Dendritic cell treated with granulocyte-macrophage colony-stimulating factor and Interleukin-4, amounts not matched to agents 40 ng/mL and 50 ng/mL, for 4 days (primary cell): ENCODE measurements at regions of chr9 and their contacts with region 1.

Region 1: GRCh38 chr9:112097712-112098688 is 77.1 kb downstream of the SUSD1 start:
- H3K4me3 Mint-ChIP-seq: no peak overlapping the region
- H3K27ac Mint-ChIP-seq: peak overlapping the region; percentile 65
- H3K4me1 Mint-ChIP-seq: peaks cover 39% of the 10 kb centered on the region
- H3K27me3 Mint-ChIP-seq: no peaks in the 10 kb centered on the region

Region 2: DNA sequence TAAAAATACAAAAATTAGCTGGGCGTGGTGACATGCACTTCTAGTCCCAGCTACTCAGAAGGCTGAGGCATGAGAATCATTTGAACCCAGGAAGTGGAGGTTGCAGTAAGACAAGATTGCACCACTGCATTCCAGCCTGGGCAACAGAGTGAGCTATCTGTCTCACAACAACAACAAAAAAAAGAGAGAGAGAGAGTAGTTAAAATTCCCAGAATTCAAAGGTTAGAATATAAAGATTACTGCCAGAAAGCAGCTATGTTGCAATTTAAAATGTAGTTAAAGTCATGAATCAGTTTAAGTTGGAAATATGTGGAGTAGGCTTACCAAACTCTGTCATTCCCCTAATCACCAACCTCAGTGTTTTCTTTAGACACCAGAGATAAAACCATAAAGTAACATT is 135.8 kb after region 1 on chr9:
- intact Hi-C with region 1: loop called (anchors 10 kb)
- H3K4me3 Mint-ChIP-seq: no peak overlapping the region
- H3K27ac Mint-ChIP-seq: no peak overlapping the region
- H3K4me1 Mint-ChIP-seq: no peaks in the 10 kb centered on the region
- H3K27me3 Mint-ChIP-seq: no peaks in the 10 kb centered on the region

Region 3: GRCh38 chr9:112333639-112334431 is 235.8 kb after region 1 on chr9:
- intact Hi-C with region 1: loop called (anchors 10 kb)
- H3K4me3 Mint-ChIP-seq: peak overlapping the region; percentile 86
- H3K27ac Mint-ChIP-seq: peak overlapping the region; percentile 85
- H3K4me1 Mint-ChIP-seq: peaks cover 17% of the 10 kb centered on the region
- H3K27me3 Mint-ChIP-seq: peaks cover 3% of the 10 kb centered on the region